Caco-2 (cell line): ENCODE measurements at regions of chr3 and their contacts with region 1.

Region 1: DNA sequence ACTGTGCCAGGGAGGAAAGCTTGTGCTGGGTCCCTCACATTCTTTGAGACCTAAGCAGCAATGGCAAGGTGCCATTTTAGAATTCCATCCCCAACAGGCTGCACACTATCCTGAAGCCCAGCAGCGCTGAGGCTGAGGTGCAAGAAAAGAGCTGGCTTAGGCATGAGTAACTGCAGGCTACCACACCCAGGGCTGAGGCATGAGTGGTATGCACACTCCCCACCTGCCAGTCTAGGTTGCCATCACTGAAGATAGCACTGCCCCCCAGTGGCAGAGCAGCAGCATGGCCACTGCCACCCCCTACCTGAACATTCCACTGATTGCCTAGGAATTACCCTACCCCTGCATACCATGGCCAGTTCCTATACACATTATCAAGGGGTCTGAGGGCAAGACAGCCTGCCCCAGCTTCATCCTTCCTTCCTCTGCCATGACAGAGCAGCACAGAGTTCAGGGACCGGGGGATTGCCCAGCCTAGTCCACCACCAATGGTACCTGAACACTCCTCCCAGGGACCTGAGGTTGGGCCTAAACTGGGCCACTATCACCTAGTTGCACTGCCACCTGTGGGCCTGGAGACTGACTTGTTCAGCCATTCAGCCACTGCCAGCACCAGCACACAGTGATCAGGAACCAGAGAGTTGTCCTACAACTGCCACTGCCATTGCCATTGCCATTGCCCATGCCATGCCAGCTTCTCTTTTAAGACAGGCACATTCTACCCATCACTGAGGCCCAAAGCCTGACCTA is 129.8 kb downstream of the SATB1 start:
- DNase-seq: peak; percentile 82 to 84
- H3K4me3 ChIP-seq: no peak overlapping the region
- H3K4me3 Mint-ChIP-seq: no peak overlapping the region
- H3K27ac Mint-ChIP-seq: peak overlapping the region; percentile 80
- H3K4me1 ChIP-seq: peaks cover 8% of the 10 kb centered on the region
- H3K4me1 Mint-ChIP-seq: peaks cover 7% of the 10 kb centered on the region
- H3K27me3 ChIP-seq: no peaks in the 10 kb centered on the region
- H3K27me3 Mint-ChIP-seq: no peaks in the 10 kb centered on the region
- CTCF ChIP-seq: peak; percentile 64 to 70

Region 2: GRCh38 chr3:18127174-18127858 is 168.0 kb before region 1 on chr3:
- CTCF ChIA-PET with region 1: no interaction called
- POLR2A ChIA-PET with region 1: no interaction called
- intact Hi-C with region 1: loop called (anchors 10 kb)
- DNase-seq: no peak
- H3K4me3 ChIP-seq: no peak overlapping the region
- H3K4me3 Mint-ChIP-seq: no peak overlapping the region
- H3K27ac Mint-ChIP-seq: no peak overlapping the region
- H3K4me1 ChIP-seq: no peaks in the 10 kb centered on the region
- H3K4me1 Mint-ChIP-seq: no peaks in the 10 kb centered on the region
- H3K27me3 ChIP-seq: no peaks in the 10 kb centered on the region
- H3K27me3 Mint-ChIP-seq: no peaks in the 10 kb centered on the region
- CTCF ChIP-seq: no peak

Region 3: DNA sequence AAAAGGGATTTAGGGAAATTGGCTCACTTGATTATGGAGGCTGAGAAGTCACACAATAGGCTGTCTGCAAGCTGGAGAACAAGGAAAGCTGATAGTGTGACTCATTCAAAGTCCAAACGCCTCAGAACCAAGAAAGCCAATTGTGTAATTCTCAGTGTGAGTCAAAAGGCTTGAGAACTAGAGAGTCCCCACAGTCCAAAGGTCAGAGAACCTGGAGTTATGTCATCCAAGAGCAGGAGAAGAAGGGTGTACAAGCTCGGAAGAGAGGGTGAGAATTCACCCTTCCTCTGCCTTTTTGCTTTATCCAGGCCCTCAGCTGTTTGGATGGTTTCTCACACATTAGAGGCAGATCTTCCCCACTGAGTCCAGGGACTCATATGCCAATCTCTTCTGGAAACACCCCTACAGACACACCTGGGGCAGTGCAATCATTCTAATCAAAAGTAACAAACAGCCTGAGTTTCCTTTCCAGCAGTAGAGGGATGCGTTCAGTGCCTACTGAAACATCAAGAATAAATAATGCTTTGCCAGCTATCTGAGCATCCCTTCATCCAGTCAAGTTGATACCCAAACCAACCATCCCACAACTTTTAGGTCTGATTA is 141.7 kb before region 1 on chr3:
- CTCF ChIA-PET with region 1: no interaction called
- POLR2A ChIA-PET with region 1: interaction called, 11 read pairs
- intact Hi-C with region 1: no loop called
- DNase-seq: peak; percentile 59 to 70
- H3K4me3 ChIP-seq: no peak overlapping the region
- H3K4me3 Mint-ChIP-seq: peak overlapping the region; percentile 29
- H3K27ac Mint-ChIP-seq: peak overlapping the region; percentile 17
- H3K4me1 ChIP-seq: peaks cover 9% of the 10 kb centered on the region; the same call in 1 of the 2 replicates
- H3K4me1 Mint-ChIP-seq: peaks cover 14% of the 10 kb centered on the region
- H3K27me3 ChIP-seq: no peaks in the 10 kb centered on the region
- H3K27me3 Mint-ChIP-seq: no peaks in the 10 kb centered on the region
- CTCF ChIP-seq: no peak

Region 4: GRCh38 chr3:18179521-18179920 is 115.8 kb before region 1 on chr3:
- CTCF ChIA-PET with region 1: no interaction called
- POLR2A ChIA-PET with region 1: no interaction called
- intact Hi-C with region 1: no loop called
- DNase-seq: no peak
- H3K4me3 ChIP-seq: no peak overlapping the region
- H3K4me3 Mint-ChIP-seq: no peak overlapping the region
- H3K27ac Mint-ChIP-seq: no peak overlapping the region
- H3K4me1 ChIP-seq: no peaks in the 10 kb centered on the region
- H3K4me1 Mint-ChIP-seq: no peaks in the 10 kb centered on the region
- H3K27me3 ChIP-seq: no peaks in the 10 kb centered on the region
- H3K27me3 Mint-ChIP-seq: no peaks in the 10 kb centered on the region
- CTCF ChIP-seq: no peak